ENCODE measurements at regions of chr3 and their contacts with region 1.

Region 1: DNA sequence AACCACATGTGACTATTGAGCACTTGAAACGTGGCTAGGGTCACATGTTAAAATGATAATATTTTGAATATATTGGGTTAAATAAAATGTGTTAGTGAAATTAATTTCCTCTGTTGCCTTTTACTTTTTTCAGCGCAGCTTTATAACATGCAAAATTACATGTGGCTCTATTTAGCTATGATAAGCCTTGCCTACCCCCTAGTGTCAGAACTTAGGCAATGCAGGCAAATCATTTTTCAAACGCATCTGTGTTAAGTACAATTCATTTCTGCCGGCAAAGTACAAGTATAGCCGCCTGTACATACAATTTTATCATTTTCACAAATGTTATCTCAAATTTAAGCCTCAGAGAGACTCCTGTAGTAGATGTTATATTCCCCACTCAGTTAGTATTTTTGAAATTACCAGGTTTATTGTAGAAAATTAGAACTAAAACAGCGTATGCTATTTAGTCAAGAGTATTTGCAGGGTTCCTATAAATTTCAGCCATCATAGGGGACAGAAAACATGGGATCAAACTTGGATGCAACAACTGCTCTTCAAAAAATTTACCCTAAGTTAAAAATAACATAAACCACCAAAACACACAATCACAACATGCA is 56.1 kb downstream of the TAFA4 start:
- DNase-seq: no peak
- H3K4me3 ChIP-seq: no peak overlapping the region
- H3K27ac ChIP-seq: no peak overlapping the region
- H3K4me1 ChIP-seq: no peaks in the 10 kb centered on the region
- H3K27me3 ChIP-seq: peaks cover 0 to 4% (median 0%) of the 10 kb centered on the region in 4 donors
- CTCF ChIP-seq: peak; percentile 73 to 85 (median 77)
- EP300 ChIP-seq: no peak
- POLR2A ChIP-seq: no peak

Region 2: GRCh38 chr3:66938338-66938963 is 1937.8 kb before region 1 on chr3:
- intact Hi-C with region 1: loop called (anchors 10 kb)
- DNase-seq: no peak
- H3K4me3 ChIP-seq: no peak overlapping the region
- H3K27ac ChIP-seq: no peak overlapping the region
- H3K4me1 ChIP-seq: no peaks in the 10 kb centered on the region
- H3K27me3 ChIP-seq: peaks cover 0 to 4% (median 0%) of the 10 kb centered on the region in 4 donors
- CTCF ChIP-seq: peak; percentile 57 to 72 (median 60)
- EP300 ChIP-seq: no peak
- POLR2A ChIP-seq: no peak

Region 3: DNA sequence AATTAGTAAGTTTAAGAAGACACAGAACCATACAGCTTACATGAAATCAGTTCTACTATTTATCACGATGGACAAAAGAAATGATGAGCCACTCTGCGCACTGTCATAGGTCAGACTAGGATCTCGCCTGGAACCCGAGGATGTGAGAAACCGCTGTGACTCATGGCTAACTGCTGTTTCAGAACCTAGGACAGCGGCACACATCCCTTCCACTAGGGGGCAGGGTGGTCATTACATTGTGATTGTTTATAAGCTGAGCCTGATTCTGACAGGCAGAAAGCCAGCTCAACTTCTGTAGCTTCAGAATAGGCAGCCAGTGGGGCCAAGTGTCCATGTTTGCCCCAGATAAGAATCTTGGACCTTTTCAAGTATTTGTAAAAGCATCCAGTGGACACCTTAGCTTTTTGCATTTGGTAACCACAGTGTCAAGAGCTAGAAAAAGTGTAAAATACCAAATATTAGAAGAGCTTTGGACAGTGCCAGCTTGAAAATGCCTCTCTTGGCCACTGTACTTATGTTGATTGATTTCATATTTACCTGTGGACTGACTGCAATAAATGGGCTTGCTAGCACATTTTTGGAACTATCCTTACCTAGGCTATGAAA is 1762.3 kb before region 1 on chr3:
- intact Hi-C with region 1: loop called (anchors 10 kb)
- DNase-seq: no peak
- H3K4me3 ChIP-seq: no peak overlapping the region
- H3K27ac ChIP-seq: no peak overlapping the region
- H3K4me1 ChIP-seq: no peaks in the 10 kb centered on the region
- H3K27me3 ChIP-seq: peaks cover 0 to 4% (median 0%) of the 10 kb centered on the region in 4 donors
- CTCF ChIP-seq: peak; percentile 66 to 78 (median 74)
- EP300 ChIP-seq: no peak
- POLR2A ChIP-seq: no peak

Region 4: DNA sequence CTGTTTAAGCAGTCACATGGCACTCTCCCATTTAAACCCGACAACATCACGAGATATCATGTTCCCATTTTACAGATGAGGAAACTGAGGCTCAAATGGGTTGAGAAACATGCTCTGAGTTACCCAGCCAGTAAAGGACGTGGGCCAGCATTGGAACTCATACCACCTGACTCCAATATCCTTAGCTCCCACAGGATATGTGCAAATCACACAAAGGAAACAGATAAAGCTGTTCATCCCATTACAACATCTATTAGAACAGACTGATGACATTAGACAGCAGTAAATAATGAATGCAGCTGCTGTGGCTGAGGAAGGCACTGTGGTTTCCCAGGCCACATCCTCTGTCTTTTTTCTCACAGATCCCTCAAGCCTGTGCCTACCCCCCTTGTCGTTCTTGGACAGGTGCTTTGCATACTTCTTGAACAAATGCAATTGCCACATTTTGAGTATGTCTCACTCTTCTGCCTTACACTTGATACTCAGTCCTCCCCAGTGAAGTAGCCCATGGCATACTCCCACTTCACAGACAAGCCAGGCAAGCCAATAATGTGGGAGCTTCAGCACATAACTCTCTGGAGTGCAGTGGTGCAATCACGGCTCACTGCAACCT is 492.0 kb after region 1 on chr3:
- intact Hi-C with region 1: no loop called
- DNase-seq: no peak
- H3K4me3 ChIP-seq: no peak overlapping the region
- H3K27ac ChIP-seq: peak overlapping the region in 1 of 4 donors; percentile 18
- H3K4me1 ChIP-seq: no peaks in the 10 kb centered on the region
- H3K27me3 ChIP-seq: no peaks in the 10 kb centered on the region
- CTCF ChIP-seq: no peak
- EP300 ChIP-seq: no peak
- POLR2A ChIP-seq: no peak

Region 5: GRCh38 chr3:69406163-69406562 is 530.0 kb after region 1 on chr3:
- intact Hi-C with region 1: no loop called
- DNase-seq: no peak
- H3K4me3 ChIP-seq: no peak overlapping the region
- H3K27ac ChIP-seq: no peak overlapping the region
- H3K4me1 ChIP-seq: peaks cover 0 to 20% (median 13%) of the 10 kb centered on the region in 4 donors
- H3K27me3 ChIP-seq: no peaks in the 10 kb centered on the region
- CTCF ChIP-seq: no peak
- EP300 ChIP-seq: no peak
- POLR2A ChIP-seq: no peak

Region 6: GRCh38 chr3:70176226-70176625 is 1300.0 kb after region 1 on chr3:
- intact Hi-C with region 1: no loop called
- DNase-seq: no peak
- H3K4me3 ChIP-seq: no peak overlapping the region
- H3K27ac ChIP-seq: no peak overlapping the region
- H3K4me1 ChIP-seq: peaks cover 0 to 16% (median 12%) of the 10 kb centered on the region in 4 donors
- H3K27me3 ChIP-seq: no peaks in the 10 kb centered on the region
- CTCF ChIP-seq: no peak
- EP300 ChIP-seq: no peak
- POLR2A ChIP-seq: no peak

Measured in esophagus muscularis mucosa (tissue), 4 donors.